CD4-positive, alpha-beta memory T cell (primary cell): ENCODE measurements at regions of chr1 and their contacts with region 1.

Region 1: DNA sequence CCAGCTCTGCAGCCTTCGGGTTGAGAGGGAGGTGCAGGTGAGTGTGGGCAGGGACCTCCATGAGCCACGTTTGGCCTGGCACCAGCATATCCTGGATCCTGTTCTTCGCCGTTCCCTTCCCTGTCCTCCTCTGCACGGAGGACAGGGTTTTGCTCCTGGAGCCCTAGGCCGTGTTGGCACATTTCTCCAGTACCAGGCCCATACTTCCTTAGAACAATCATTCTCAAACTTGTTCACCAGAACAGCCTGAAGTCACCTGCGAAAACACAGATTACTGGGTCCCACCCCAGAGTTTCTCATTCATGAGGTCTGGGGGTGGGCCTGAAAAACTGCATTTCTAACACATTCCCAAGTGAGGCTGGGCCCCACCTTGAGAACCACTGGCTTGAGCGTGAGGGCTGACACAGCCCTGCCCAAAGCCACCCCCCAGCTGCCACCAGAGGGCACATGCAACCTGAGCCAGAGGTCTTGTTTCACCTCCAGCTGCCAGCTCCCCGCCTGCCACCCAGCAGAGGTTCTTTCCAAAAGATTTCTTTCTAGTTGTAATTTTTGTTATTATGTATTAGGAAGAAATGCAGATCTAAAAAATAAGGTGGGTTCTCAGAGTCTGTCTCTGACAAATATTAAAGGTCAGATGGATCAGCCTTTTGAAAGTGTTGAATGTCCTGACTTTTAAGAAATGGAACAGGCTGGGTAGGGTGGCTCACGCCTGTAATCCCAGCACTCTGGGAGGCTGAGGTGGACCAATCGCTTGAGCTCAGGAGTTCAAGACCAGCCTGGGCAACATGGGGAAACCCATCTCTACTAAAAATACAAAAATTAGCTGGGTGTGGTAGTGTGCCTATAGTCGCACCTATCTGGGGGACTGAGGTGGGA is 39.6 kb upstream of the LDLRAP1 start:
- DNase-seq: peak; percentile 68 to 74 (median 70)
- H3K4me3 ChIP-seq: no peak overlapping the region
- H3K4me3 Mint-ChIP-seq: no peak overlapping the region
- H3K27ac ChIP-seq: no peak overlapping the region
- H3K27ac Mint-ChIP-seq: peak overlapping the region in 4 of 7 donors; percentile 6 to 55 (median 40)
- H3K4me1 ChIP-seq: peaks cover 23% of the 10 kb centered on the region
- H3K4me1 Mint-ChIP-seq: peaks cover 10 to 29% (median 19%) of the 10 kb centered on the region in 4 donors
- H3K27me3 ChIP-seq: no peaks in the 10 kb centered on the region
- H3K27me3 Mint-ChIP-seq: no peaks in the 10 kb centered on the region

Region 2: GRCh38 chr1:25182629-25183028 is 321.2 kb before region 1 on chr1:
- CTCF ChIA-PET with region 1: no interaction called
- POLR2A ChIA-PET with region 1: no interaction called
- intact Hi-C with region 1: no loop called
- DNase-seq: no peak
- H3K4me3 ChIP-seq: no peak overlapping the region
- H3K4me3 Mint-ChIP-seq: no peak overlapping the region
- H3K27ac ChIP-seq: no peak overlapping the region
- H3K27ac Mint-ChIP-seq: no peak overlapping the region
- H3K4me1 ChIP-seq: no peaks in the 10 kb centered on the region
- H3K4me1 Mint-ChIP-seq: no peaks in the 10 kb centered on the region
- H3K27me3 ChIP-seq: no peaks in the 10 kb centered on the region
- H3K27me3 Mint-ChIP-seq: peaks cover 0 to 2% of the 10 kb centered on the region in 2 donors

Region 3: DNA sequence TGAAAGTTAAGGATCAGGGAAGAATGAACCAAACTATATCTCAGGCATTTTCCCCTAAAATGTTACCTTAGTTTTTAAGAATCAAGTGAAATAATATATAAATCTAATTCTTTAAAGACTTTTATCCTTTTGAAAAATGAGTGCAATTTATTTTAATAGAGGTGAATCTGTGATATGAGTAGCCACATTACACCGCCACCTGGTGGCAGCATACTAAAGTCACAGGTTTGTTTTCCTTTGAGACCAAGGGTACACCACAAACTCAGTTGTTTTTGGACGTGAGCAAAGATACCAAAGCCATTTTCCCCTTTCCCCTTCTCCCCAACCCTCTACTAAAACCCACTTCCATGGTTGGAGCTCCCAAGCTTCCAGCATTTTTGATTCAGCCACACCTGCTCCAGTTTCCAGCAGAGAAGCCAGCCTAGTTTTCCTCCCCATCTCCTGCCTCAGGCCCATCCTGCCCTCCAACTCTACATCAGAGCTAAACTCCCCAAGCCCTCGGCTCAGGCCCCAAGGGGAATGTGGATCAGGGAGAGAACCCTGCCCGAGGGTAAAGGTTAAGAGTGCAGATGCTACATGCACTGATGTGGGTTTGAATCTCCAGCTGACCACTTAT is 16.8 kb after region 1 on chr1:
- CTCF ChIA-PET with region 1: interaction called, 236 read pairs
- POLR2A ChIA-PET with region 1: interaction called, 31 read pairs
- intact Hi-C with region 1: loop called (anchors 1 kb)
- DNase-seq: peak; percentile 61 to 66 (median 62)
- H3K4me3 ChIP-seq: no peak overlapping the region
- H3K4me3 Mint-ChIP-seq: no peak overlapping the region
- H3K27ac ChIP-seq: no peak overlapping the region
- H3K27ac Mint-ChIP-seq: peak overlapping the region in 5 of 7 donors; percentile 68 to 84 (median 78)
- H3K4me1 ChIP-seq: peaks cover 5% of the 10 kb centered on the region
- H3K4me1 Mint-ChIP-seq: peaks cover 6 to 10% (median 8%) of the 10 kb centered on the region in 4 donors
- H3K27me3 ChIP-seq: no peaks in the 10 kb centered on the region
- H3K27me3 Mint-ChIP-seq: peaks cover 0 to 2% of the 10 kb centered on the region in 2 donors

Region 4: DNA sequence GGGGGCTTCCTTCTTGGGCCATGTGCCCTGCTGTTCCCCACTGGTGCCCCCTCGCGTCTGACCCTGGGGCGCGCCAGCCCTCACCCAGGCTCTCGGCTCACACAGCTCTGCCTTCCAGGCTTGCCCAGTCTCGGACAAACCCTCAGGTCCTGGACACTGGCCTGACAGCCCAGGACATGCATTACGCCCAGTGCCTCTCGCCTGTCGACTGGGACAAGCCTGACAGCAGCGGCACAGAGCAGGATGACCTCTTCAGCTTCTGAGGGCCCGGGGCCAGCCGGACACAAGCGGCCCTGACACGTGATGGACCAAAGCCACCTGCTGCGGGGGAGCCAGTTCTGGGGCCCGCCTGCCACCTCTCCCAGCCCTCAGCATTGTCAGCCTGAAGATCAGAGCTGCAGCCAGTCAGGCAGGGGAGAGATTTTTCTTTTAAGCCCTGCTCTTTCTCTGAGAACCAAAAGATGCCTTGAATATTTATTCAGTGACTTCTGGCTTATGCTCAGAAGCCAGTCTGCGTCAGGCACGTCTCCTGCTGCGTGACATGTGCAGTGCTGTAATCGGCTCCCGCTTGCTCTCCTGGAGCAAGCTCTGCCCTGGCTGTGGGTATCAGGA is 63.0 kb after region 1 on chr1:
- CTCF ChIA-PET with region 1: interaction called, 21 read pairs
- POLR2A ChIA-PET with region 1: interaction called, 3 read pairs
- intact Hi-C with region 1: loop called (anchors 5 kb)
- DNase-seq: peak in 1 of 5 donors; percentile 46
- H3K4me3 ChIP-seq: no peak overlapping the region
- H3K4me3 Mint-ChIP-seq: peak overlapping the region in 5 of 8 donors; percentile 13 to 88 (median 68)
- H3K27ac ChIP-seq: no peak overlapping the region
- H3K27ac Mint-ChIP-seq: peak overlapping the region in 6 of 7 donors; percentile 32 to 95 (median 73)
- H3K4me1 ChIP-seq: peaks cover 76% of the 10 kb centered on the region
- H3K4me1 Mint-ChIP-seq: peaks cover 35 to 93% (median 60%) of the 10 kb centered on the region in 4 donors
- H3K27me3 ChIP-seq: no peaks in the 10 kb centered on the region
- H3K27me3 Mint-ChIP-seq: no peaks in the 10 kb centered on the region

Region 5: GRCh38 chr1:25572708-25573600 is 69.2 kb after region 1 on chr1:
- CTCF ChIA-PET with region 1: interaction called, 21 read pairs
- POLR2A ChIA-PET with region 1: interaction called, 6 read pairs
- intact Hi-C with region 1: no loop called
- DNase-seq: peak in 4 of 5 donors; percentile 29 to 41 (median 36)
- H3K4me3 ChIP-seq: no peak overlapping the region
- H3K4me3 Mint-ChIP-seq: no peak overlapping the region
- H3K27ac ChIP-seq: no peak overlapping the region
- H3K27ac Mint-ChIP-seq: peak overlapping the region in 6 of 7 donors; percentile 27 to 77 (median 68)
- H3K4me1 ChIP-seq: peaks cover 31% of the 10 kb centered on the region
- H3K4me1 Mint-ChIP-seq: peaks cover 10 to 57% (median 30%) of the 10 kb centered on the region in 4 donors
- H3K27me3 ChIP-seq: no peaks in the 10 kb centered on the region
- H3K27me3 Mint-ChIP-seq: no peaks in the 10 kb centered on the region

Region 6: GRCh38 chr1:25631750-25632485 is 128.1 kb after region 1 on chr1:
- CTCF ChIA-PET with region 1: no interaction called
- POLR2A ChIA-PET with region 1: no interaction called
- intact Hi-C with region 1: no loop called
- DNase-seq: peak in 2 of 5 donors; percentile 29 to 33
- H3K4me3 ChIP-seq: peak overlapping the region in 1 of 2 donors; percentile 33
- H3K4me3 Mint-ChIP-seq: peak overlapping the region; percentile 73 to 93 (median 84)
- H3K27ac ChIP-seq: peak overlapping the region; percentile 57
- H3K27ac Mint-ChIP-seq: peak overlapping the region; percentile 59 to 98 (median 95)
- H3K4me1 ChIP-seq: peaks cover 64% of the 10 kb centered on the region
- H3K4me1 Mint-ChIP-seq: peaks cover 49 to 74% (median 60%) of the 10 kb centered on the region in 4 donors
- H3K27me3 ChIP-seq: no peaks in the 10 kb centered on the region
- H3K27me3 Mint-ChIP-seq: no peaks in the 10 kb centered on the region

Region 7: GRCh38 chr1:25796811-25797458 is 293.1 kb after region 1 on chr1:
- CTCF ChIA-PET with region 1: interaction called, 6 read pairs
- POLR2A ChIA-PET with region 1: interaction called, 3 read pairs
- intact Hi-C with region 1: loop called (anchors 5 kb)
- DNase-seq: peak; percentile 78 to 87 (median 81)
- H3K4me3 ChIP-seq: peak overlapping the region in 1 of 2 donors; percentile 44
- H3K4me3 Mint-ChIP-seq: peak overlapping the region; percentile 58 to 88 (median 80)
- H3K27ac ChIP-seq: peak overlapping the region; percentile 45
- H3K27ac Mint-ChIP-seq: peak overlapping the region; percentile 86 to 98 (median 95)
- H3K4me1 ChIP-seq: peaks cover 54% of the 10 kb centered on the region
- H3K4me1 Mint-ChIP-seq: peaks cover 32 to 66% (median 49%) of the 10 kb centered on the region in 4 donors
- H3K27me3 ChIP-seq: no peaks in the 10 kb centered on the region
- H3K27me3 Mint-ChIP-seq: peaks cover 0 to 2% of the 10 kb centered on the region in 2 donors

Region 8: GRCh38 chr1:25810341-25811299 is 306.8 kb after region 1 on chr1:
- CTCF ChIA-PET with region 1: interaction called, 62 read pairs
- POLR2A ChIA-PET with region 1: interaction called, 4 read pairs
- intact Hi-C with region 1: loop called (anchors 1 kb)
- DNase-seq: peak; percentile 66 to 79 (median 69)
- H3K4me3 ChIP-seq: no peak overlapping the region
- H3K4me3 Mint-ChIP-seq: no peak overlapping the region
- H3K27ac ChIP-seq: no peak overlapping the region
- H3K27ac Mint-ChIP-seq: peak overlapping the region in 3 of 7 donors; percentile 35 to 84 (median 64)
- H3K4me1 ChIP-seq: peaks cover 5% of the 10 kb centered on the region
- H3K4me1 Mint-ChIP-seq: peaks cover 0 to 10% (median 2%) of the 10 kb centered on the region in 4 donors
- H3K27me3 ChIP-seq: no peaks in the 10 kb centered on the region
- H3K27me3 Mint-ChIP-seq: no peaks in the 10 kb centered on the region

Region 9: DNA sequence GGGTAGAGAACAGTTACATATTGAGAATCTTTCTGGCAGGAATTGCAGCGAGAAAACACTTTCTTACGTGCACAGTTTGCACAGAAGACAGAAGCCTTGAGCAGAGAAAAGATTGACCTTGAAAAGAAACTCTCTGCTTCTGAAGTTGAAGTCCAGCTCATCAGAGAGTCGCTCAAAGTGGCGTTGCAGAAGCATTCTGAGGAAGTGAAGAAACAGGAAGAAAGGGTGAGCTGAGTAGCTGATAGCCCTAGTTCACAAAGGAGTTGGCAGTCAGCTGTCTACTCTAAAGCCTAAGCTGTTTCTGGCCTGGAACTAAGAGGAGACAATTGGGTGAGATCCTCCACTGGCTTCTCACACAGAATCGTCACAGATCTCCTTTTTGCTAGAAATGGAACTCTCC is 755.8 kb after region 1 on chr1:
- CTCF ChIA-PET with region 1: no interaction called
- POLR2A ChIA-PET with region 1: no interaction called
- intact Hi-C with region 1: no loop called
- DNase-seq: no peak
- H3K4me3 ChIP-seq: no peak overlapping the region
- H3K4me3 Mint-ChIP-seq: no peak overlapping the region
- H3K27ac ChIP-seq: no peak overlapping the region
- H3K27ac Mint-ChIP-seq: peak overlapping the region in 2 of 7 donors; percentile 30 to 37
- H3K4me1 ChIP-seq: no peaks in the 10 kb centered on the region
- H3K4me1 Mint-ChIP-seq: peaks cover 0 to 2% (median 0%) of the 10 kb centered on the region in 4 donors
- H3K27me3 ChIP-seq: no peaks in the 10 kb centered on the region
- H3K27me3 Mint-ChIP-seq: no peaks in the 10 kb centered on the region